Gastrocnemius medialis (tissue), 4 donors: ENCODE measurements at regions of chr21 and their contacts with region 1.

Region 1: DNA sequence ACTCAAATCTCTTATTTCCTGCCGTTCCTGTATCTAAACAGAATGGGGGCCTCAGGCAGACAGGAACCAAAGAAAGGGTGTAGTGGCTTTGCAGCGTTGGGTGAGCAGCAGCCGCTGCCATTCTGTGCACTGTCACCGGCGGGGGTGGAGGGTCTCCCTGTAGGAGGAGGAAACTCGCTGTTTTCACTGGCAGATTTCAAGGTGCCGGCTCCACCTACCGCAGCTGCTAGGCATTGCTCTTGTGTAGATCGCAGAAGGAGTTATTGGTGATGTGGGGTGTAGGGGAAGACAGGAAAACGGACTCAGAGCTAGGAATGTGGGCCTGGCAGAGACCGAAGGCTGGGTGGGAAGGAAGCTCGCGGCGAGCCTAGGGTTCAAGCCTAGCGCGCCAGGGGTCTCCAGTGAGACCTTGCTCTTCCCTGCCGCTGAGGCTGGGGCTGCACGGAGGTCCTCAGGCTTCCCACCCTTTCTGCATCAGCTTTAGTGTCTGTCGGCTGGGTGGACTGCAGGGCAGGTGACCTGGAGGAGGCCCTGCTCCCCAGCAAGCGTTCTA is 20.8 kb downstream of the ATP5PO start:
- DNase-seq: peak; percentile 51 to 53
- ATAC-seq: peak; percentile 75 to 80
- H3K4me3 ChIP-seq: peak overlapping the region; percentile 15 to 42 (median 41)
- H3K27ac ChIP-seq: no peak overlapping the region
- H3K4me1 ChIP-seq: peaks cover 5 to 9% of the 10 kb centered on the region in 2 donors
- H3K27me3 ChIP-seq: no peaks in the 10 kb centered on the region
- CTCF ChIP-seq: peak; percentile 24 to 59 (median 36)
- POLR2A ChIP-seq: no peak

Region 2: DNA sequence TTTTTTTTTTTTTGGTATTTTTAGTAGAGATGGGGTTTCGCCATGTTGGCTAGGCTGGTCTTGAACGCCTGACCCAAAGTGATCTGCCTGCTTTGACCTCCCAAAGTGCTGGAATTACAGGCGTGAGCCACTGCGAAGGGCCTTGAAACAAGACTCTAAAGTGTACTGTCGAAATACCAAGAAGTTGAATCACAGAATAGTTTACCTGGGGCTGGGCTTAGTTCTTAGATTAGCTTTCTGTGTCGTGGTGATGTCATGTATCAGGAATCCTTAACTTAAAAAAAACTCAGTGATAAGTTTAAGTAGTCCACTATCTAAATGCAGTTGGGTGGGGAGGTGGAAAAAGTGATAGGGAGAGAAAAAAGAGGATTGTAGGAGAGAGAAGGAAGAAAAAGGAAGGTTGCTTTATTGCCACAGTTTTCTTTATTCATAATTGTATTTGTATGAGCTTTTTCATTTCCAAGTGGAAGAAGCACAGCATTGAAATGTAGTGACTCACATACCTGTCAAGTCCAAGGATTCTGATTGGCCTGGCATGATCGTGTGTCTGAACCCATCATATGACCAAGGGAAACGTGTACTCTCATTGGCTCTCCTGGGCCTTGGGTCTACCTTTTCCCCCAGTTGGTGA is 239.1 kb before region 1 on chr21:
- in situ Hi-C with region 1: loop called in 1 of 4 experiments (anchors 25 kb)
- intact Hi-C with region 1: no loop called
- DNase-seq: no peak
- ATAC-seq: peak in 1 of 2 donors; percentile 39
- H3K4me3 ChIP-seq: no peak overlapping the region
- H3K27ac ChIP-seq: no peak overlapping the region
- H3K4me1 ChIP-seq: peaks cover 23 to 28% of the 10 kb centered on the region in 2 donors
- H3K27me3 ChIP-seq: no peaks in the 10 kb centered on the region
- CTCF ChIP-seq: no peak
- POLR2A ChIP-seq: no peak